ENCODE measurements at regions of chr17 and their contacts with region 1.

Region 1: DNA sequence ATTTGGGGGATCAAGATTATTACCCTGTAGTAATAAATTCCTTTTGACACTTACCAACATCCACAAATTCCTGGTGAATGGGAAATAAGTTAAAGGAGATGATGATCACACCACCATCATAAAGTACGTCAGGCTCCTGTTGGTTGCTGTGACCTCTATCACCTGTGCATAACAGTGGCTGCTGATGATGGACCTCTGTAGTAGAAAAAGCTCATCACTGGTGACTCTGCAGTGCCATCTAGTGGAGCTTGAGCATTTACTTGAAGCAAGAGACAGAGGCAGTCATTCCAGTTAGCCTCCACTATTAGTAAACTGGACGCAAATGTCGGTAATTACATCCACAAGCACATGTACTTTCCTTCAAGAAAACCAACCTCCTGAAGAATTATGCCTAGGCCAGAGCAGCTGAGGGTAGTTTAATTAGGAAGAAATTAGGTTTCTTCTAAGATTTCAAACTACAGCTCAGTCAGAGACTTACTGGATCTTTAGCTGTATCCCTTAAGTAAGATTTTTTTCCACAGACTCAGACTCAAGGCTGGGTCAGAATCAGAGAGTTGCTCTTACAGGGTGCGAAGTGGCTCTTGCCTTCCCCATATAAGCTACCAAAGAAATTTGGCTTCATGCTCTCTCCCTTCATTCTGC is 39.3 kb downstream of the CYB561 start:
- DNase-seq: peak in 1 of 3 donors; percentile 95
- ATAC-seq: peak; percentile 96
- H3K4me3 ChIP-seq: no peak overlapping the region
- H3K4me1 ChIP-seq: no peaks in the 10 kb centered on the region
- CTCF ChIP-seq: peak; percentile 61

Region 2: GRCh38 chr17:62671583-62672312 is 735.1 kb before region 1 on chr17:
- intact Hi-C with region 1: loop called in 1 of 2 experiments (anchors 2 kb)
- DNase-seq: peak in 2 of 3 donors; percentile 66 to 68
- ATAC-seq: peak; percentile 74
- H3K4me3 ChIP-seq: no peak overlapping the region
- H3K4me1 ChIP-seq: no peaks in the 10 kb centered on the region
- CTCF ChIP-seq: no peak

Region 3: GRCh38 chr17:62703775-62704378 is 702.9 kb before region 1 on chr17:
- intact Hi-C with region 1: loop called in 1 of 2 experiments (anchors 5 kb)
- DNase-seq: peak; percentile 74 to 86 (median 76)
- ATAC-seq: peak; percentile 95
- H3K4me3 ChIP-seq: no peak overlapping the region
- H3K4me1 ChIP-seq: no peaks in the 10 kb centered on the region
- CTCF ChIP-seq: peak; percentile 74

Region 4: GRCh38 chr17:62995377-62995885 is 411.4 kb before region 1 on chr17:
- intact Hi-C with region 1: loop called in 1 of 2 experiments (anchors 10 kb)
- DNase-seq: peak in 2 of 3 donors; percentile 36 to 62
- ATAC-seq: peak; percentile 24
- H3K4me3 ChIP-seq: no peak overlapping the region
- H3K4me1 ChIP-seq: no peaks in the 10 kb centered on the region
- CTCF ChIP-seq: no peak

Region 5: DNA sequence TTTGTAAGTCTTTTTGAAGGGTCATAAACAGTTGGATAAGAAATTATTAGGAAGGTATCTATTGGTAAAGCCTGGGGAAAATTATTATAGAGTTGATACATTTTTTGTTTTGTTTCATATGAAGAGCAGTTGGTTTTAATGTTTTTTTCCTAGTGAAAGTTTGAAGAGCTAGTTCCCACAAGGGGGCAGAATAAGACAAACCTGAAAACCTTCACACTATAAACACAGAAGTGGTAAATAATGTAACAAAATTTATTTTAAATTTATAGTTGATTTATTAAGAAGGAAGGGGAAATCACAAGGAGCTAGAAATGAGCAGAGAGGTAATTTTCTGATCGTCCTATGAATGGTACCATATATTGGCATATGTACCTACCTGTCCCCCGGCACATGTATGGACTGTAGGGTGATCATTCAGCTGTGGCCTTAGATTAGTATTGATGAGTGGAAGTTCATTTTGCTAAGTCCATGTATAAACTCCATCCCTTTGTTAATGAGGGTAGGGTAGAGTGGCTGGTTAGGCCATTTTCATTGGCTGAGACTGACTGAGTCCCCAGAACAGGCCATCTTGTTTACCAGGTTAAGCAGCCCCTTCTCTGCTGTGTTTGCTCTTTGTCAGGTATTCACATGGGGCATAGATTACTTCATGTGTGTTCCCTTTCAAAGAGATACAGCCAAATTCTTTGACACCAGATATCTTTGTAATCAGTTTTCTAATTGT is 324.4 kb before region 1 on chr17:
- intact Hi-C with region 1: loop called (anchors 5 to 10 kb)
- DNase-seq: peak in 1 of 3 donors; percentile 5
- ATAC-seq: no peak
- H3K4me3 ChIP-seq: no peak overlapping the region
- H3K4me1 ChIP-seq: no peaks in the 10 kb centered on the region
- CTCF ChIP-seq: no peak

Region 6: DNA sequence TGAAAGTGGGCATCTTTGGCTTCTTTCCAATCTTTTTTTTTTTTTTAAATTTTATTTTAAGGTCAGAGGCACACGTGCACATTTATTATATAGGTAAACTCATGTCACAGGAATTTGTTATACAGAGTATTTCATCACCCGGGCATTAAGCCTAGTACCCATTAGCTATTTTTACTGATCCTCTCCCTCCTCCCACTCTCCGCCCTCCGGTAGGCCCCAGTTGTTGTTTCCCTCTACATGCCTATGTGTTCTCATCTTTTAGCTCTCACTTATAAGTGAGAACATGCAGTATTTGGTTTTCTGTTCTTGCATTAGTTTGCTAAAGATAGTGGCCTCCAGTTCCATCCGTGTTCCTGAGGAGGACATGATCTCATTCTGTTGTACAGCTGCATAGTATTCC is 69.2 kb before region 1 on chr17:
- intact Hi-C with region 1: no loop called
- DNase-seq: no peak
- ATAC-seq: no peak
- H3K4me3 ChIP-seq: no peak overlapping the region
- H3K4me1 ChIP-seq: no peaks in the 10 kb centered on the region
- CTCF ChIP-seq: no peak

Region 7: DNA sequence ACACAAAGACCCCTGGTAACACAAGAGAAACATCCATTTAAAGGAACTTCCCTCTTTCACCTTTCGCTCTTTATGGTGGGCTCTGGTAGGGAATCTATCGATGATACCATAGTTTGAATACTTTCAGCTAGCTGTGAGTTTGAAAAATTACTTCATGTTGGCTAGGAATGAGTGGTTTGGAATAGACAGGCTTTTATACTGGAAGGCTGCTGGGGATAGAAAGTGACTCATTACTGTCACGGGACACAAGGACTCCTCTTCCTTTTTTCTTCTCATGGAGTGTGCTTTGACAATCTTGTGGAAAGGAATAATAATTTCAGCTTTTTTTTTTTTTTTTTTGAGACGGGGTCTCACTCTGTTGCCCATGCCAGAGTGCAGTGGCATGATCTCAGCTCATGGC is 37.6 kb before region 1 on chr17:
- intact Hi-C with region 1: no loop called
- DNase-seq: no peak
- ATAC-seq: no peak
- H3K4me3 ChIP-seq: no peak overlapping the region
- H3K4me1 ChIP-seq: no peaks in the 10 kb centered on the region
- CTCF ChIP-seq: no peak